A549 (cell line): ENCODE measurements at regions of chr5 and their contacts with region 1.

Region 1: DNA sequence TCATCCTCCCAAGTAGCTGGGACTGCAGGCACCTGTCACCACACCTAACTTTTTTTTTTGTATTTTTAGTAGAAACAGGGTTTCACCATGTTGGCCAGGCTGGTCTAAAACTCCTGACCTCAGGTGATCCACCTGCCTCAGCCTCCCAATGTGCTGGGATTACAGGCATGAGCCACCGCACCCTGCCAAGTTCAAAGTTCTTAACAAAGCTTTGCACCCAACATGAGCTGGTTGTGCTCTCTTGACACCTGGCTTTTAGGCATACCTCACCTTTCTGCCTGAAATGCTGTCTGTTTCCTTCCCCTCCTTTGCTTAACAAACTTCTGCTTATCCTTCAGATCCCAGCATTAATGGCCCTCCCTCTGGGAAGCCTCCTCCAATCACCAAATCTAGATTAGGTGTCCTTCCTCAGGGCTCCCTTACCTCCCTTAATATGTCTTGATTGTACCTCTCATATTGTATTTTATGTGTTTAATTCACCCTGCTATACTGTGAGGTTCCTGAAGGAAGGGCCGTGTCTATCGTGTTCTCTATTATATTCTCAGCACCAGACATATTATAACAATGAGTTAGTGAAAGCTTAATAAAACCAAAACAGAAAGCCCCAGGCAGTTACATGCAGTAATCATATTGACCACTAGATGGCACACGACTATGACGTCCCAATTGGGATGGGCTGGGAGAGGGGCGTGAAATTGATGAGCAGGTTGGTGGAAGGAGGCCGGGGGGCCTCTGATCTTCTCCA is 62.9 kb upstream of the PPARGC1B start:
- DNase-seq: peak; percentile 47 to 62
- ATAC-seq: peak; percentile 60 to 79; a peak in 5 of 6 replicates
- H3K4me3 ChIP-seq: no peak overlapping the region
- H3K27ac ChIP-seq: no peak overlapping the region
- H3K4me1 ChIP-seq: peaks cover 23% of the 10 kb centered on the region
- CTCF ChIP-seq: peak; percentile 88
- EP300 ChIP-seq: no peak
- POLR2A ChIP-seq: no peak
- RAD21 ChIP-seq: peak; percentile 71 to 72

Region 2: DNA sequence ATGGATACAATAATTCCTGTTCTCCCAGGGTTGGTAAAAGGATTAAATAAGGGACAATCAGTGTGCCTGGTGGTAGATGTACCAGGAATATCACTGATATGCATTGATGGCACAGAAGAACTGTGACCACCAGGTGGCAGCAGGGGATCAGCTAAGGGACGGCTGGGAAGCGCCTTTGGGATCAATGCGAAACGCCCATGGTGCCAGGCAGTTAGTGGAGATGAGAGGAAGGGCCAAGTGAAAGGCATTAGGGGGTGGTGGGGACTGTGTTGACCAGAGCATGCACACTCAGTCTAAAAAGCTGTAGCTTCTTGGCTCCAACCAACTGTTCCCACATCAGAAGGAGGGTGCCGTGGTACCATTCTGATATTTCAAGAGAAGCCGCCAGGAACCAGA is 30.4 kb before region 1 on chr5:
- CTCF ChIA-PET with region 1: interaction called, 90 read pairs
- POLR2A ChIA-PET with region 1: no interaction called
- DNase-seq: peak; percentile 70 to 72
- ATAC-seq: peak; percentile 79 to 93
- H3K4me3 ChIP-seq: no peak overlapping the region
- H3K27ac ChIP-seq: no peak overlapping the region
- H3K4me1 ChIP-seq: peaks cover 10% of the 10 kb centered on the region; the same call in 2 of the 3 replicates
- CTCF ChIP-seq: peak; percentile 92
- EP300 ChIP-seq: no peak
- POLR2A ChIP-seq: no peak
- RAD21 ChIP-seq: peak; percentile 95 to 96

Region 3: GRCh38 chr5:149680810-149681221 is 13.6 kb after region 1 on chr5:
- CTCF ChIA-PET with region 1: interaction called, 30 read pairs
- POLR2A ChIA-PET with region 1: no interaction called
- DNase-seq: no peak
- ATAC-seq: no peak
- H3K4me3 ChIP-seq: no peak overlapping the region
- H3K27ac ChIP-seq: no peak overlapping the region
- H3K4me1 ChIP-seq: no peaks in the 10 kb centered on the region
- CTCF ChIP-seq: no peak
- EP300 ChIP-seq: no peak
- POLR2A ChIP-seq: no peak
- RAD21 ChIP-seq: no peak

Region 4: GRCh38 chr5:149740866-149741459 is 73.7 kb after region 1 on chr5:
- CTCF ChIA-PET with region 1: interaction called, 10 read pairs
- POLR2A ChIA-PET with region 1: no interaction called
- DNase-seq: no peak
- ATAC-seq: no peak
- H3K4me3 ChIP-seq: no peak overlapping the region
- H3K27ac ChIP-seq: no peak overlapping the region
- H3K4me1 ChIP-seq: no peaks in the 10 kb centered on the region
- CTCF ChIP-seq: no peak
- EP300 ChIP-seq: no peak
- POLR2A ChIP-seq: no peak
- RAD21 ChIP-seq: no peak

Region 5: GRCh38 chr5:149822301-149822700 is 155.0 kb after region 1 on chr5:
- CTCF ChIA-PET with region 1: interaction called, 106 read pairs
- POLR2A ChIA-PET with region 1: no interaction called
- DNase-seq: no peak
- ATAC-seq: no peak
- H3K4me3 ChIP-seq: no peak overlapping the region
- H3K27ac ChIP-seq: no peak overlapping the region
- H3K4me1 ChIP-seq: no peaks in the 10 kb centered on the region
- CTCF ChIP-seq: no peak
- EP300 ChIP-seq: no peak
- POLR2A ChIP-seq: no peak
- RAD21 ChIP-seq: no peak

Region 6: DNA sequence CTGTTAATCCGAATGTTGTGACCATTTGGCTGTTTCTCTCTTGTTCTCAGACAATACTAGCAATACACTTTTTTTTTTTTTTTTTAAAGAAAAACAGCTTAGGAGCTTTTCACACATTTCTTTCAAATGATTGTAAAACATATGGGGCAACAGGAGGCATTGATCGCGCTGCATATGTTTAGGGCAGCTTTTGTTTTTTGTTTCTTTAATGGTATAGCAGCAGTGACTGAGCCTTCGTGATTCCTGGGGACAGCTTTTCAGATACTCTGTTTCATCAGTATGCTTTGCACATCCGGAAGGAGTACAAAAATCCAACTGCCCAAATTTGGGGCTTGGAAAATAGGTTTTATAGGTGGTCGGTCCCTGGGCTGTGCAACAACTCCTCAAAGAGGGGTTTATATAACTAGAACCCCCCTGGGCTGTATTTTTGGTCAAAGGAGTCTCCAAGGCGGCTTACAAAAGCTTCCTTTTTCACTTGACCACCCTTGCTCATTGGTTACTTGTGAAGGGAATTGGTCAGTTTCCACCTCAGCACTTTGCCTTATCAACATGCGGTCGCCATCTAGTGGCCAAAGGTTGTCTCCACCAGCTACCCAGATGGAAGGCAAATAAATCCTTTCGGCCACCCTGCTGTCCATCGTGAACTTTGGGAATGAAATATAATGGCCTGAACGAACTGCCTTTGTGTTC is 185.5 kb after region 1 on chr5:
- CTCF ChIA-PET with region 1: interaction called, 16 read pairs
- POLR2A ChIA-PET with region 1: no interaction called
- DNase-seq: peak; percentile 76 to 77
- ATAC-seq: peak; percentile 86 to 94
- H3K4me3 ChIP-seq: no peak overlapping the region
- H3K27ac ChIP-seq: peak overlapping the region; percentile 34 to 42; a peak in 2 of 6 replicates
- H3K4me1 ChIP-seq: peaks cover 13% of the 10 kb centered on the region
- CTCF ChIP-seq: peak; percentile 89
- EP300 ChIP-seq: no peak
- POLR2A ChIP-seq: no peak
- RAD21 ChIP-seq: peak; percentile 62 to 70